Cardiac septum (tissue), 1 donor: ENCODE measurements at regions of chr2 and their contacts with region 1.

Region 1: DNA sequence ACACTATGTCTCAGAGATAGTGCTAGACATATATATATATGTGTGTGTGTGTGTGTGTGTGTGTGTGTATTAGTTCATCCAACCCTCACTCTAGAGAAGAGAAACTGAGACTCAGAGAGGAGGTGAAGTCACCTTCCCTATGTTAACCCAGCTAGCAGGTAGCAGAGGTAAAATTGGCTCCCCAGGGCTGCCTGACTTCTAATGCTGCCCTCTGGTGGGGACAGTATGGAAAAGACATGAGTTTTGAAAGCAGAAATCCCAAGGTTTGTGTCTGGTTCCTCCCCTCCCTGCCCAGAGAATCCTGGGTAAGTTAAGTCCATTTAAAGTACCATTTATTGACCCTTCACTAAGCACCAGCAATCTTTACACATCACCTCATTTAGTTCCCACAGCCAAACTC is 137.7 kb downstream of the THNSL2 start:
- DNase-seq: no peak

Region 2: DNA sequence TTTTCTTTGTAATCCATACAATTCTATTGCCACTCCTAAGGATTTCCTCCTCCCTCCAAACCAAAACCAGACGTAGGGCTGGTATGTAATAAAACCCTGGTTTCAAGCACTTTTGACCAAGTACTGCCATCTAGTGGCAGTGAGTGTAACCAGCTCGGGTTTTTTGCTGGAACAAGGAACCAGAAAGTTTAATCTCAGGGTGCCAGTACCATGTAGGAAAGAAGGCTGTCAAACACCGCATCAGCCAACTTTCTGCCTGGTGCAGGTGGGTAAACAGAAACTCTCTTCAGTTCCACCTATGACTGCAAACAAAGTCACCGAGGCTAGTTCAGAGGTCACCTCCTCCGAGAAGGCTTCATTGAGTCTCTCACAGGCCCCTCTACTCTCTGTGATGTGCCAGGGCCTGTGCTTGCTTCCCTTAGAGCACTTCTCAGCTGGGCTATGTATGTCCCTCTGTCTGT is 147.8 kb before region 1 on chr2:
- intact Hi-C with region 1: no loop called
- DNase-seq: no peak

Region 3: DNA sequence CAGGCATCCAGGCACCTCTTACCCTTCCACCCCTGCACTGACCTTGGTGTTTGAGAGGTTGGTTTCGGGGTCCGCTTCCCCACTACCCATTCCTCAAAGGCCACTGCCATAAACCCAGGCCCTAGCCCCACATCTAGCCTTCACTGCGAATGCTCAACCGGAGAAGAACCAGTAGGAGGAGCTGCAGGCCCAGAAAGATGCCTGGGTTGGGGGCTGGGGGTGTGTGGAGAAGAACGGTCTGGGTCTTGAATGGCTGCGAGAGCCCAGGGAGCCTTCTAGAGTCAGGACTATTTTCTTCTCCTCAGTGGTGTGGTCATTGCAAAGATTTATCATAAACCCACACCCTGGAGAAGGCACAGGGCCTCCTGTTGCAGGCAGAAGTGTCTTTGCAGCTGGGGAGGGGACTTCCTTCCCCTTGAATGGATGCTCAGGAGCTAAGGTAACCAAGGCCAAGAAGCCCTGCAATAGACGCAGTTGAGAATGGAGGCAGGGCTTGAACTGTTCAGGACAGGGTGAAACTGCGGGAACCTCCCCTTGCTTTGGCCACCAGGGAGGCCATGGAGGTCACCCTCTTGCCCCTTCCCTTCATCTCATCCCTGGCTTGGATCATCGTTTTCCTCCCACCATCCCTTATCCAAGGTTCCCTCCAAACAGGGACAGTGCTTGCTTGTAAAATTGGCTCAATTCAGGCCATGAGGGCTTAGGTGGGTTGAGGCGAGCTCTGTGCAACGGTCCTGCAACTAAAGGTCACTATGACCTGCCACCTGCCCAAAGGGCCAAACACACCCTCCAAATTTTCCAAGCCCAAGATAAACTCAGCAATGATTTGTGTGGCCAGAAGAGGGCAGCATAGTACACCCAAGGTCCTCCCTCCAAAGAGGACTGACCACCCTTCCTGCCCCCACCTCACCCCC is 116.8 kb before region 1 on chr2:
- intact Hi-C with region 1: loop called (anchors 5 kb)
- DNase-seq: no peak